Left cardiac atrium (tissue), 4 donors: ENCODE measurements at regions of chr11 and their contacts with region 1.

Region 1: DNA sequence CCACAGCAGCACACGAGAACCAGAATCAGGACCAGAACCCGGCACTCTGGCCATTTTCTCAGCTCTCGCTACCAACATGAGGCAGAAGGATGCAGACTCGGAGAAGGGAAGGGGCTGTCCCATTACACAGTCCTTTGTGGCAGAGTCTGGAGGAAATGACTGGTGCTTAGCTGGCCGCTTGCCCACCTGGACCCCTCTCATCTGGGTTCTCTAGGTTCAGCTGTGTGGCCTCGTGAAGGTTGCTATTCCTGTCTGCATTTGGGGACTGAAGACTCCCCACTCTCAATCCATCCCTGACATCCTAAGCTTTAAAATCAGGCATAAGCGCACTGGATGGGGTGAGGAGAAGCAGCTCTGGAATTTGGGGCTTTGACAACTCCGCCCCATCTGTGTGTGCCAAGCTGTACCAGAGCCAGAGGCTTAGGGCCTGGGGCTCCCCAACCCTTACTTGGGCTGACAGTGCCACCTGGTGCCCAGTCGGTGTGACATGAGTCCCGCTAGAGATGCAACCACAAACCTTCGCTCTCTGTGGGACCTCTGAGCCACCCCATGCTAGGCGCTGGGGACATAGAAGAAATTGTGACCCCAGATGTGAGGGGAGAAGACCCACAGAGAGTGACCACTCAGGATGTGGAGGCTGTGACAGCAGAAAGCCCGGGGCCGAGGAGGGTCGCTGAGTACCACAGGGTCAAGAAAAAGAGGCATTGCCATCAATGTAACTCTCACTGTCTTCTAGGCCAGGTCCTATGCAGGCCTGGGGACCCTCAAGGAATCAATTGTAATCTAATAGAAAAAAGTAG is 35.9 kb upstream of the FCHSD2 start:
- DNase-seq: peak; percentile 90
- ATAC-seq: peak; percentile 83 to 84

Region 2: DNA sequence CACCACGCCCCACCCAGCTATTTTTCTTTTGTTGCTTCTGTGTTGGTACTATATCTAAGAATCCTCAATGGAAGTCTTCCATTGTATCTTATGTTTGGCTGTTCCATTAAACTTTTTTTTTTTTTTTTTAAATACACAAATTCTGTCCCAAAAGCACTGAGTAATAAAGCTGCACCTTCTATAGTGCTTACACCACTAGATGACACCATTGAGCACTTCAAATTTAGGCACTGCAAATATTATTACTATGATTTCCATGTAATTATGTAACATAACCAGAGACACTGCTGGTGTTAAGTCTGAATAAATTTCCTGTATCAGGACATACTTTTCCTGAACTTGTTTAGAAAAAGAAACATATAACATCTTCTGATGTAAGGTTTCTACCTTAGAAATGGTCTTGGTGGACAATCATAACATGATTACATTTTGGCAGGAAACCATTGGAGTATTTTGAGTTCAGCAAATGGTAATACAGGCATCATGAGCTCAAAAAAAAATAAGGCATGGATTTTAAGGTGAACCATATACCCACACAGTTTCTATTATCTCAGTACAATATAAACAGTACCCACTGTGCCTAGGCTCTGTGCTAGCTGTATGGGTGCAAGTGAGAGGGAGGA is 253.3 kb before region 1 on chr11:
- intact Hi-C with region 1: loop called in 1 of 2 experiments (anchors 5 kb)
- DNase-seq: no peak
- ATAC-seq: peak; percentile 53 to 70

Region 3: GRCh38 chr11:73141848-73142286 is 36.1 kb before region 1 on chr11:
- intact Hi-C with region 1: loop called in 1 of 2 experiments (anchors 2 kb)
- DNase-seq: peak; percentile 86
- ATAC-seq: peak; percentile 56 to 63

Region 4: GRCh38 chr11:73218106-73218829 is 40.3 kb after region 1 on chr11 and contains the start of gene P2RY2:
- intact Hi-C with region 1: no loop called
- DNase-seq: peak; percentile 86
- ATAC-seq: peak; percentile 89 to 90
- total RNA-seq, gene P2RY2: 12.0 to 16.5 TPM

Region 5: DNA sequence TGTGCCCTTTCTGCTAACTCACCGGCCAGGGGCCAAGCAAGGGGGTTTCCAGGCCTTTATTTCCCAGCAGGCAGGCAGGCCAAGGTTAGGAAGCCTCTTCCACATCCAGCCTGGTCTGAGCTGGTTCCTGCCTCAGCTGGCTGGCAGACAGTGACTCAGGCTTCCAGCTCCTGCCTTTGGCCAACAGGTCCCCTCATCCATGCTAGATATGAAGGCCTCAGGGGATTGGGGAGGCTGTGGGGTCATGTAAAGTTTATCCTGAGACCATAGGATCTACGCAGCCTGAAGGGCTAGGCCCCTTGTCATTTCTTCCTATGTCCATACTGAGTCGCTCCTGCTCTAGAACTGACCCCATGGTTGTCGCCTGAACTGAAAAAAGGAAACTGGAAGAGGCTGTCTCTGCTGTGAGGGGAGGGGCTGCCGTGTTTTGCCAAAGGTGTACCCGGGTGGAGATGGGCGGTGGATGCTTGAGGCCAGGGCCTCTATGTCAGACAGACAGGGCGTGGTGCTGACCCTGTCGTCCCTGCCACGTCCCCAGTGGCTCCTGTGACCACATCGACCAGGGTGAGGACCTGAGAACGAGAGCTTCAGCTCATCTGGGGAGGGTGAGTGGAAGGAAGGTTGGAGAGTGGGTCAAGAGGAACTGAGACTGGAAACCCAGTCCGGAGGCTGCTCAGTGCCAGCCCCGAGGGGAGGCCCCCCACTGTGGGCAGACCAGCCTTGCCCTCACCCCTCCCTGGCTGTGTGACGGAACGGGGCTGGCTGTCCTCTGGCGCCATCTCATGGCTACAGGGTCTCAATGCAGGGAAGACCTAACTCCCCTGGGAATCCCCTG is 111.1 kb after region 1 on chr11:
- intact Hi-C with region 1: no loop called
- DNase-seq: peak; percentile 81
- ATAC-seq: peak; percentile 82 to 86

Region 6: DNA sequence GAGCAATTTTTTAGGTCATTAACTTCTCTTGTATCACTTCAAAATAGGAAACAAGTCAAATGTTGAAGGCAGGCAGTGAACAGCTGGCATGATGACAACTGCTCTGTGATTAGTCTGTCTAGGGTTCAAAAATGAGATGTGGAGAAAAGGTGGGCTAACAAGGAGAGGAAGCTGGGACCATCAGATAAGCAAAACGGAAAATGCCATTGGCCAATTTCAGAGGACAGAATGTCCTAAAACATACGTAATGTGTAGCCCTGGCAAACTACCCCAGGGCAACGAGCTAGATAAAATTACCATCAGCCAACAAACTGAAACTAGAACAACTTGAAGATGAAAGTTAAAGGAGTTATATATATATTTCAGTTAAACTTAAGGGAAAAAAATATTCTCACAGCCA is 291.4 kb after region 1 on chr11:
- intact Hi-C with region 1: no loop called
- DNase-seq: no peak
- ATAC-seq: peak; percentile 44 to 58